ENCODE measurements at regions of chr10 and their contacts with region 1.

Region 1: DNA sequence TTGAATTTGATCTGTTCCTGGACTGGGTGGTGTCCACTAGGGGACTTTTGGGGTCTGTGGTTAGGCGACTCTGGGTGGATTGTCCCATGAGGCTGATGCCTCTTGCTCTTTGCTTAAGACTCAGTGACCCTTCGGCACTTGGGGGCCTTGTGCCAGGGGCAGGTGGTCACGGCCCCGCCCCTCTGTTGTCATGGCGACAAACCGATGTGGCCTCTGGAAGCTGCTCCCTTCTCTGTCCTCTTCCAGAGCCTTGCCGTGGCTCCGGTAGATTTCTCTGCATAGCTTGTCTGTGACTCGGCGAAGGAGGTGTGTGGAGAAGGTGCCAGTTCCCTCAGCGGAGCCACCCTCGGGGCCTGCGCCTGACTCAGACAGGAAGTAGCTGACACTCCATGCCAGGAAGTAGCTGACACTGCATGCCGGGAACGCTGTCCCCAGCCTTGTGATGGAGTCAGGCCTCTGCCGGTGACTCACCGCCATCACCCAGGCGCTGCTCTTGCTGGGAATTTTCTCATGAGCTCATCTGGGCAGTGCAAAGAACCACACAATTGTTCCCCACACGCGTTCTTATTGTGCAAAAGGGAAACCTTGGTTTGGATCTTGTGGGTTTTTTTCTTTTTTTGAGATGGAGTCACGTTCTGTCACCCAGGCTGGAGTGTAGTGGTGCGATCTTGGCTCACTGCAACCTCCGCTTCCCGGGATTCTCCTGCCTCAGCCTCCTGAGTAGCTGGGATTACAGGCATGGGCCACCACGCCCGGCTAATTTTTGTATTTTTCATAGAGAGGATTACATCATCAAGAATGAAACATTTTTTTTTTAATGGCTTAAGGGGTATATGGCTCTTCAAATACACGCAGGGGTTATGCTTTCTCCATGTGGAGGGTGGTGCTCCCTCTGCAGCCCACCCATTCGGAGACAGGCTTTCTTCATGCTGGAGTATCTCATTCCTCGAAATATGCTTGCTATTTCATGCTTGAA is 72.6 kb downstream of the PFKFB3 start:
- DNase-seq: peak; percentile 97
- H3K4me3 Mint-ChIP-seq: peak overlapping the region; percentile 70
- H3K27ac Mint-ChIP-seq: peak overlapping the region; percentile 97
- H3K4me1 Mint-ChIP-seq: peaks cover 62% of the 10 kb centered on the region
- H3K27me3 Mint-ChIP-seq: no peaks in the 10 kb centered on the region

Region 2: GRCh38 chr10:6260843-6261242 is 14.5 kb before region 1 on chr10:
- CTCF ChIA-PET with region 1: no interaction called
- POLR2A ChIA-PET with region 1: no interaction called
- intact Hi-C with region 1: no loop called
- DNase-seq: no peak
- H3K4me3 Mint-ChIP-seq: no peak overlapping the region
- H3K27ac Mint-ChIP-seq: no peak overlapping the region
- H3K4me1 Mint-ChIP-seq: no peaks in the 10 kb centered on the region
- H3K27me3 Mint-ChIP-seq: no peaks in the 10 kb centered on the region

Region 3: GRCh38 chr10:6314620-6315205 is 39.4 kb after region 1 on chr10:
- CTCF ChIA-PET with region 1: no interaction called
- POLR2A ChIA-PET with region 1: no interaction called
- intact Hi-C with region 1: no loop called
- DNase-seq: no peak
- H3K4me3 Mint-ChIP-seq: no peak overlapping the region
- H3K27ac Mint-ChIP-seq: no peak overlapping the region
- H3K4me1 Mint-ChIP-seq: peaks cover 7% of the 10 kb centered on the region
- H3K27me3 Mint-ChIP-seq: no peaks in the 10 kb centered on the region

Region 4: GRCh38 chr10:6348096-6348874 is 73.0 kb after region 1 on chr10:
- CTCF ChIA-PET with region 1: interaction called, 13 read pairs
- POLR2A ChIA-PET with region 1: interaction called, 29 read pairs
- intact Hi-C with region 1: loop called (anchors 1 kb)
- DNase-seq: peak; percentile 93
- H3K4me3 Mint-ChIP-seq: peak overlapping the region; percentile 73
- H3K27ac Mint-ChIP-seq: peak overlapping the region; percentile 99
- H3K4me1 Mint-ChIP-seq: peaks cover 57% of the 10 kb centered on the region
- H3K27me3 Mint-ChIP-seq: no peaks in the 10 kb centered on the region